Activated CD4-positive, alpha-beta T cell treated with anti-CD3 and anti-CD28 coated beads, Interleukin-2, amount 10 ng/mL, durations not matched to agents 7 days and 5 days (primary cell): ENCODE measurements at regions of chr3 and their contacts with region 1.

Region 1: DNA sequence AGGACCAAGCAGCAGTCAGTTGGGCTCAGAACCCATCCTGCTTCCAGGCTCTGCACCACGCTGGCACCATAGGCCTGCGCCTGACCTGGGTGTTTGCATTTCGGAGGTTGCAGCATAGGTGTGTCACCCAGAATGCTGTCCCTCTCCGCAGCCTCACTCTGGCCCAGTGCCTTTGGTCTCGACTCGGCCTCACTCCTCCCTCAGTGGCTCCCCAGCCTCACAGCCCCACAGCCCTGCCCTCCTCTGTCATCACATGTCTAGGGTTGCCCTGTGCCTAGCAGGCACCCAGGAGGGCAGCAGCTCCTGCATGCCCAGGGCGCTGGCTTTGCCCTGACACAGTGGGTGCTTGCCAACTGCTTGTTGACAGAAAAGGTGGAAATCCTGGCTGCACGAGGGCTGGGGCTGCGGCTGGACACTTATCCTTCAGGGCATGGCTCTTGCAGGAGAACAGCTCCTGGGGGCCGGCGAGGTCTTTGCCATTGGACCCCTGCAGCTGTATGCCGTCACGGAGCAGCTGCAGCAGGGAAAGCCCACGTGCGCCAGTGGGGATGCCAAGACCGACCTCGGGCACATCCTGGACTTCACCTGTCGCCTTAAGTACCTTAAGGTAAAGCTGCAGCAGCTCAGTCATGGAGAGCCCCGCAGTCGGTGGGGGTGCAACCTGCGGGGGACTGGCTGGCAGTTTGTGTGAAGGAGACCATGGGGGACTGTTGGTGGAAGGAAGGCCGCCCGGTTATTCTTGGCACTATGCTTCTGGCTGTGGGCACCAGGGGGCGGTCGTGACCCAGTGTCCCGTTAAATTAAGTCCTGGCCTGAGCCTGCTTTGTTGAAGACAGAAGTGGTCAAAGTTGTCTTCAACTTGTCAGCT is 16.2 kb downstream of the NISCH start:
- DNase-seq: peak; percentile 39
- H3K4me3 Mint-ChIP-seq: no peak overlapping the region
- H3K27ac Mint-ChIP-seq: no peak overlapping the region
- H3K4me1 Mint-ChIP-seq: peaks cover 4% of the 10 kb centered on the region
- H3K27me3 Mint-ChIP-seq: no peaks in the 10 kb centered on the region

Region 2: GRCh38 chr3:52456169-52456799 is 15.3 kb before region 1 on chr3:
- CTCF ChIA-PET with region 1: interaction called, 10 read pairs
- POLR2A ChIA-PET with region 1: no interaction called
- DNase-seq: no peak
- H3K4me3 Mint-ChIP-seq: peak overlapping the region; percentile 89
- H3K27ac Mint-ChIP-seq: peak overlapping the region; percentile 98
- H3K4me1 Mint-ChIP-seq: peaks cover 39% of the 10 kb centered on the region
- H3K27me3 Mint-ChIP-seq: no peaks in the 10 kb centered on the region